ENCODE measurements at regions of chr19 and their contacts with region 1.

Region 1: GRCh38 chr19:18112989-18113478 is 15.5 kb downstream of the MAST3 start:
- DNase-seq: peak; percentile 77 to 98 (median 90)

Region 2: GRCh38 chr19:17973759-17974158 is 139.3 kb before region 1 on chr19:
- intact Hi-C with region 1: no loop called
- DNase-seq: no peak

Region 3: GRCh38 chr19:18251587-18252369 is 138.7 kb after region 1 on chr19:
- intact Hi-C with region 1: loop called (anchors 5 kb)
- DNase-seq: peak; percentile 54 to 95 (median 82)